ENCODE measurements at regions of chr1 and their contacts with region 1.

Region 1: GRCh38 chr1:201042779-201043461 is 19.4 kb upstream of the KIF21B start:
- DNase-seq: peak; percentile 81
- H3K4me3 Mint-ChIP-seq: no peak overlapping the region
- H3K27ac Mint-ChIP-seq: no peak overlapping the region
- H3K4me1 Mint-ChIP-seq: peaks cover 3% of the 10 kb centered on the region
- H3K27me3 Mint-ChIP-seq: no peaks in the 10 kb centered on the region

Region 2: GRCh38 chr1:200639790-200640669 is 402.9 kb before region 1 on chr1:
- CTCF ChIA-PET with region 1: no interaction called
- POLR2A ChIA-PET with region 1: no interaction called
- intact Hi-C with region 1: no loop called
- DNase-seq: peak; percentile 59
- H3K4me3 Mint-ChIP-seq: no peak overlapping the region
- H3K27ac Mint-ChIP-seq: no peak overlapping the region
- H3K4me1 Mint-ChIP-seq: peaks cover 9% of the 10 kb centered on the region
- H3K27me3 Mint-ChIP-seq: no peaks in the 10 kb centered on the region

Region 3: DNA sequence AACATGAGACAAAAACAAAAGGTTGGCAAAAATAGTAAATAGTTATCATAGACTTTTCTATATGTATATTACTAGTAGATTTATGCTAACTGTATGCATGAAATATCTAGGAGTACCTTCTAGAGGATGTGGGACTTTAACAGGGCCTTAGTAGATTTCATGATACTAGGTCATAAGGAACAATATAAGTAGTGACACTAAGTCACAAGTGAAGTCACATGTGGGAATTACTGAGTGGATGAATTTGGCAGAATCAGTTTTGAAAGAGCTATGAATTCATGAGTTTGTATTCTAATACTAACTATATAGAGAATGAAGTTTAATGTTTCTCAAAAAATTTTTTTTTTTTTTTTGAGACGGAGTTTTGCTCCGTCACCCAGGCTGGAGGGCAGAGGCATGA is 223.2 kb before region 1 on chr1:
- CTCF ChIA-PET with region 1: no interaction called
- POLR2A ChIA-PET with region 1: no interaction called
- intact Hi-C with region 1: no loop called
- DNase-seq: no peak
- H3K4me3 Mint-ChIP-seq: no peak overlapping the region
- H3K27ac Mint-ChIP-seq: no peak overlapping the region
- H3K4me1 Mint-ChIP-seq: no peaks in the 10 kb centered on the region
- H3K27me3 Mint-ChIP-seq: no peaks in the 10 kb centered on the region

Region 4: DNA sequence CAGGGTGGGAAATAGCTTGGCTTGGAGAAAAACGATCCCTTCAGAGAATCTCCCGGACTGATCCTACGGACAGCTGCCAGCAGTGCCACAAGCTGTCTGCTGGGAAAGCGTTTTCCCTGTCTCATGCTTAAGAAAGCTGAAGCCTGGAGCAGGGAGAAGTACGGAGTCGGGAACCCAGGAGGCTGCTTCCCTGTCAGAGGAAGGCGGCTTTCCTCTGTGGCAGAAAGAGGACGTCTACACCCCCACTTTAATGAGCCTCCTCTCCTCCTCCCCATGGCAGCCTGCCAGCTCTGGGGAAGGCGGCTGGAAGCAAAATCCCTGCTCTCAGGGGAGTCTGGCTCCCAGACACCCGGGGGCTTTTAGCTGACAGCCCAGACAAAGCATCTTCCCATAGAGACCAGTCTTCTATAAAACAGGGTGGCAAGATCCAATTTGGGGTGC is 26.7 kb before region 1 on chr1:
- CTCF ChIA-PET with region 1: interaction called, 15 read pairs
- POLR2A ChIA-PET with region 1: no interaction called
- intact Hi-C with region 1: no loop called
- DNase-seq: no peak
- H3K4me3 Mint-ChIP-seq: no peak overlapping the region
- H3K27ac Mint-ChIP-seq: peak overlapping the region; percentile 87
- H3K4me1 Mint-ChIP-seq: peaks cover 94% of the 10 kb centered on the region
- H3K27me3 Mint-ChIP-seq: no peaks in the 10 kb centered on the region